ENCODE measurements at regions of chr4 and their contacts with region 1.

Region 1: DNA sequence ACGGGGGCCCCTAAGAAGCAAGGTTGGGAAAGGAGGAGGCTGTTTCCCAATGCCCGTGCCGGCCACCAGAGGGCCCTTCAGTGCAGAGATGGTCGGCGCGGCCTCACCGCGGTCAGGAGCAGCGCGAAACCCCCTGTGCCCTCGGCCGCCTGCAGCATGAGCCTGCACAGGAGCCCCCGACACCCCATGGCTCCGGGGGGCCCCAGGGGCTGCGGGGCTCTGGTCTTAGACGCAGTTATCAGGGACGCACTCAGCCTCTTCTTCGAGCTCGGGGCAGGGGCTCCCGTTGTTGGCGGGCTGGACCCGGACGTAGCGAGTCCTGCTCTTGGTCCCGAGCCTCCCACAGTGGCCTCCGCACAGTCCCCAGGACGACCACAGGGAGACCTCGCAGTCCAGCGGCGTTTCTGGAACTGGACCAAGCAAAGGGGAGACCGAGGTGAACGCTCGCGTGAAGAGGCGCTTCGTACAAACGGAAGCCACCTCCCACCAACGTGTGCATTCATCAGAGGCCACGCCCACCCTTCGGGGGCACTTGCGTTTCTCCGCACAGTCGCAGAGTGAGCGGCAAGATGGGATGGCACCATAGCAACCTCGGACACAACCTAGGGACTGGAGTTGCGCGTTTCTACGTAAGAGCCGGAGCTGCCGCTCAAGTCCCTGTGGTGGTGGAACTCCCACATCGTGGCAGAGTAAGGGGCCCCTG is 5.0 kb downstream of the SPON2 start:
- DNase-seq: peak; percentile 79 to 98 (median 91)
- ATAC-seq: peak; percentile 84
- H3K4me3 ChIP-seq: peak overlapping the region; percentile 92 to 97
- H3K4me3 Mint-ChIP-seq: peak overlapping the region; percentile 88
- H3K27ac ChIP-seq: peak overlapping the region; percentile 70 to 85
- H3K27ac Mint-ChIP-seq: peak overlapping the region; percentile 83
- H3K4me1 ChIP-seq: peaks cover 28% of the 10 kb centered on the region
- H3K4me1 Mint-ChIP-seq: peaks cover 26% of the 10 kb centered on the region
- H3K27me3 ChIP-seq: peaks cover 11 to 13% of the 10 kb centered on the region in 2 experiments
- H3K27me3 Mint-ChIP-seq: peaks cover 7% of the 10 kb centered on the region
- CTCF ChIP-seq: peak; percentile 97

Region 2: DNA sequence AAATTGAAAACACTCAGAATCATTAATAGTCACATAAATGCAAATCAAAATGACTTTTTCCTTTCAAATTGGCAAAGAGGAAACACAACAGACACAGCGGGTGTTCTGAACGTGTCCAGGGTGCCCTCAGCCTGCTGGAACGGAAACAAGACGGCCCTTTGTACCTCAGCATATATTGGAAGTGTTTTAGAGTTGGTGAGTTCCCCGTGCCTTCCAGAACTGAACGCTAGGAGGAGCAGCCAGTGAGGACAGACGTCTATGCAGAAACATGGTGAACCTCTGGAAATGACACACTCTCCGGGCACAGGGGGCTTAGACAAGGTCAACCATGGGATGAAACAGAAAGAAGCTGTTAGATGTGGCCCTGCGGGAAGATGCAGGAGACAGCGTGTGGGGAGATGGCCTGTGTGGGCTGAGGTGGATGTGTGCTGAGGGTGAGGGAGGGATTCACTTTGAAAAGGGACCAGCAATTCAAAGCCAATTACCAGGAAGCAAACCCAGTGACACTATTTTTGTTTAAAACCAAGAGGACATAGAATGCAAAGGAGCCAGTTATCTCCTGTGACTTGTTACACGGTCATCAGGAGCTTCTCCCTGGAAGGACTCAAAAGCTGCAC is 94.5 kb before region 1 on chr4:
- CTCF ChIA-PET with region 1: no interaction called
- POLR2A ChIA-PET with region 1: no interaction called
- intact Hi-C with region 1: no loop called
- DNase-seq: peak; percentile 21 to 75 (median 56)
- ATAC-seq: peak; percentile 97
- H3K4me3 ChIP-seq: no peak overlapping the region
- H3K4me3 Mint-ChIP-seq: no peak overlapping the region
- H3K27ac ChIP-seq: no peak overlapping the region
- H3K27ac Mint-ChIP-seq: peak overlapping the region; percentile 37
- H3K4me1 ChIP-seq: peaks cover 11% of the 10 kb centered on the region
- H3K4me1 Mint-ChIP-seq: peaks cover 12% of the 10 kb centered on the region
- H3K27me3 ChIP-seq: no peaks in the 10 kb centered on the region
- H3K27me3 Mint-ChIP-seq: peaks cover 15% of the 10 kb centered on the region
- CTCF ChIP-seq: peak; percentile 62

Region 3: GRCh38 chr4:1130316-1131186 is 36.8 kb before region 1 on chr4:
- CTCF ChIA-PET with region 1: interaction called, 13 read pairs
- POLR2A ChIA-PET with region 1: no interaction called
- intact Hi-C with region 1: loop called in 1 of 2 experiments (anchors 1 kb)
- DNase-seq: peak; percentile 60 to 88 (median 74)
- ATAC-seq: peak; percentile 100
- H3K4me3 ChIP-seq: no peak overlapping the region
- H3K4me3 Mint-ChIP-seq: no peak overlapping the region
- H3K27ac ChIP-seq: no peak overlapping the region
- H3K27ac Mint-ChIP-seq: no peak overlapping the region
- H3K4me1 ChIP-seq: no peaks in the 10 kb centered on the region
- H3K4me1 Mint-ChIP-seq: peaks cover 4% of the 10 kb centered on the region
- H3K27me3 ChIP-seq: no peaks in the 10 kb centered on the region
- H3K27me3 Mint-ChIP-seq: peaks cover 2% of the 10 kb centered on the region
- CTCF ChIP-seq: peak; percentile 99

Region 4: DNA sequence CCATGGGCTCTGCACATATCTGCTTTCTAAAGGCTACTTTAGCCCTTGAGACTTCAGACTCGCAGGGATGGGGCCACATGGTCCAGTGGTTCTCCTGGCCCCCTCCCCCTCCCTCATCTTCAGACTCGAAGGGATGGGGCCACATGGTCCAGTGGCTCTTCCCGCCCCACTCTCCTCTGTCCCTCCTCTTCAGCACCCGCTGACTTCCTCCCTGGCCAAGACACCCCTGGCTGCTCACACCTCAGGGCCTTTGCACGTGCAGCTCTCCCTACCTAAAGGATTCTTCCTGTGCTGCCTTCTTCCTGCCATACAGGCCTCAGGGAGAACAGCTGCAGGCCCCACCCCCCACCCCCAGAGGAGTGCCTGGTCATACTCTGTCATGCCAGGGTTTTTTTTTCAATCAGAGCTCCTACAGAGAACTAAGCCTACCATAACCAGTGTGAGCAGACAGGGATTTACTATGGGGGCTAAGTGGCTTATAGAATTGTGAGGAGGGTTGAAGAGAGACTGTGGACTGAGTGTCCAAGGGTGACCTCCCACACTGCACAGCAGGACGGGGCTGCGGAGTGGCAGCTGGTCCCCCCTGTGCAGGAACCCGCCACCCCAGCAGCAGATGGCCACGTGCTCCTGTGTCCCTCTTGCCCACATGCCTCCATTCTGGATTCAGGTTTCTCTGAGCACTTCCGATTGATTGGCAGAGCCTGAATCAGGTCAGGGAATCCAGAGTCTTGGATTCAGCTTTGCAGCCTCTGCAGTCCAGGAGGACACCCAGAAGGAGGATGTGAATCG is 11.1 kb after region 1 on chr4:
- CTCF ChIA-PET with region 1: interaction called, 16 read pairs
- POLR2A ChIA-PET with region 1: interaction called, 3 read pairs
- intact Hi-C with region 1: no loop called
- DNase-seq: no peak
- ATAC-seq: no peak
- H3K4me3 ChIP-seq: no peak overlapping the region
- H3K4me3 Mint-ChIP-seq: no peak overlapping the region
- H3K27ac ChIP-seq: no peak overlapping the region
- H3K27ac Mint-ChIP-seq: no peak overlapping the region
- H3K4me1 ChIP-seq: peaks cover 12% of the 10 kb centered on the region
- H3K4me1 Mint-ChIP-seq: peaks cover 21% of the 10 kb centered on the region
- H3K27me3 ChIP-seq: no peaks in the 10 kb centered on the region
- H3K27me3 Mint-ChIP-seq: peaks cover 3% of the 10 kb centered on the region
- CTCF ChIP-seq: no peak

Region 5: GRCh38 chr4:1218634-1219565 is 51.5 kb after region 1 on chr4:
- CTCF ChIA-PET with region 1: interaction called, 18 read pairs
- POLR2A ChIA-PET with region 1: interaction called, 3 read pairs
- intact Hi-C with region 1: loop called (anchors 1 kb)
- DNase-seq: no peak
- ATAC-seq: no peak
- H3K4me3 ChIP-seq: no peak overlapping the region
- H3K4me3 Mint-ChIP-seq: peak overlapping the region; percentile 18
- H3K27ac ChIP-seq: no peak overlapping the region
- H3K27ac Mint-ChIP-seq: peak overlapping the region; percentile 69
- H3K4me1 ChIP-seq: peaks cover 25% of the 10 kb centered on the region
- H3K4me1 Mint-ChIP-seq: peaks cover 43% of the 10 kb centered on the region
- H3K27me3 ChIP-seq: no peaks in the 10 kb centered on the region
- H3K27me3 Mint-ChIP-seq: no peaks in the 10 kb centered on the region
- CTCF ChIP-seq: no peak

Region 6: DNA sequence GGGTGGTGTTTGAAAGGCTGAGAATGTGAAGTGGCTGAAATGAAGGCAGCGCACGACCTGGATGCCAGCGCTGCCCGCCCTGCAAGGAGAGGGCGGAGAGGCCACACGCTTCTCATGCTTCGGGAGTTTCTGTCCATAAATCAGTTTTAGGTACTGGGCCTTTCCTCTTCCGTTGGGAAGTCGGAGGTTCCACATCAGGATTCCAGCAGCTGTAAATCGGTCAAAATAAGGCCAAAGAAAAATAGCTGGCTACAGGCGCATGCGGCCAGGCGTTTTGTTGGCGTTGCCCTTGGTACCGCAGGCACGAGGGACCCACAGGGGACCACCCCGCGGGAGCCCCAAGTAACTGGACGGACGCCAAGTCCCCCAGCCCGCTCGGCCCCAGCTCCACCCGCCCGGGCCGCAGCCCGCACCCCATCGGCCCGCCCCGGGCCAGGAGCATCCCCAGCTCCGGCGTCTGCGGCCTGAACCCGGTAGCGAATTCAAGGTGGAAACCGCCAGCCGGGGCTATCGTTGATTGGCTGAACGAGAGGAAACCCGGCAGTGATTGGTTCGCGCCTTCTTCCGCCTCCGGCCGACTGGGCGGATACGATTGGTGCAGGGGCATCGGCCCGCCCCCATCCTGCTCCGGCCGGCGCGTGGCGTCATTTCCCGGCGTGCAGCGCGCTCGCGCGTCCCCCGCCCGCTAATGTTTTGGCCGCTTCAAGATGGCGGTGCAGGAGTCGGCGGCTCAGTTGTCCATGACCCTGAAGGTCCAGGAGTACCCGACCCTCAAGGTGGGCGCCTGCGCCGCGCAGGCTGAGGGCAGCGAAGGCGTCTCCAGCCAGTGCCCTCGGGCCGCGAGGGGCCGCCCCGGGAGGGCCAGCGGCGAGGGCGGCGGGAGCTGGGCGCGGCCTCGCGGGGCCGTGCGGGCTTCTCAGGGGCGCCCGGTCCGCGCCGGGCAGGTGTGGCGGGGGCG is 122.1 kb after region 1 on chr4 and contains the start of gene MAEA:
- CTCF ChIA-PET with region 1: no interaction called
- POLR2A ChIA-PET with region 1: no interaction called
- intact Hi-C with region 1: loop called (anchors 1 to 5 kb)
- DNase-seq: peak; percentile 94 to 98 (median 96)
- ATAC-seq: peak; percentile 97
- H3K4me3 ChIP-seq: peak within 1 kb of the TSS; percentile 57 to 92
- H3K4me3 Mint-ChIP-seq: peak within 1 kb of the TSS; percentile 92
- H3K27ac ChIP-seq: peak within 1 kb of the TSS; percentile 74 to 80
- H3K27ac Mint-ChIP-seq: peak within 1 kb of the TSS; percentile 91
- H3K4me1 ChIP-seq: peaks cover 38% of the 10 kb centered on the region
- H3K4me1 Mint-ChIP-seq: peaks cover 42% of the 10 kb centered on the region
- H3K27me3 ChIP-seq: no peaks in the 10 kb centered on the region
- H3K27me3 Mint-ChIP-seq: no peaks in the 10 kb centered on the region
- CTCF ChIP-seq: no peak
- total RNA-seq, gene MAEA: 74.6 to 77.6 TPM

Region 7: DNA sequence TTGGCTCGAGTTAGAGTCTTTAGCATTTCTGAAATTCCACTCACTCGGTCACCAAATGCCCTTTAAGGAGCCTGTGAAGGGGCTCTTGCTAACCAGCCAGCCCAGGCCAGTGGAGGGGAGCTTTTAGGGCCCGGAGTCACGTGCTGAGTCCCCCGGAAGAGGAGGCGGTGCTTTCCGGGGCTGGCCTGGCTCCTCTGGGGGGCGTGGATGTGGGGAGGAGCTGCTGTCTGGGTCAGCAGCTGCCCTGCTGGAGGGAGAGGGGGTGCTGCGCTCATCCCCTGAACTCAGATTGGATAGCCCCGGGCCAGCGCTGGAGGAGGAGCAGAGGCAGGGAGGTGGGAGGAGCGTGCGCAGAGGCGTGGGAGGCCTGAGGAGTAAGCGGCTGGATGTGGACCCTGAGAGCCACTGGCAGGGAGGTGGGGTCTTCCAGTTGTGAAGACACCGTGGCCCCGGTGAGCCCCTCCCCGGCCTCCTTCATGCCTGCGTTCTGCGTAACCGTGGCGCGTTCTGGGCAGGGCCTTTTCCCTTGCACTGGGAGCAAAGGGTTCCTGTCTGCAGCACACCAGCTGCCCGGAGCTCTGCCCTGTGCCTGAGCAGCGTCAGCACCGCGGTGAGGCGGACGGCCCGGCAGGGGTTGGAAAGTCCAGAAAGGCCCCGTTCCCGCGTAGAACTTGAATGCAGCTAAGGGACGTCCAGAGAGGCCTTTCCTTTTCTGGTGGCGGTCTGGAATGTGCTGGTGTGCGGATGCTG is 142.0 kb after region 1 on chr4:
- CTCF ChIA-PET with region 1: no interaction called
- POLR2A ChIA-PET with region 1: no interaction called
- intact Hi-C with region 1: no loop called
- DNase-seq: peak in 8 of 9 experiments; percentile 39 to 80 (median 66)
- ATAC-seq: peak; percentile 74
- H3K4me3 ChIP-seq: peak overlapping the region; percentile 33 to 49
- H3K4me3 Mint-ChIP-seq: peak overlapping the region; percentile 79
- H3K27ac ChIP-seq: peak overlapping the region in 1 of 2 experiments; percentile 37
- H3K27ac Mint-ChIP-seq: peak overlapping the region; percentile 85
- H3K4me1 ChIP-seq: peaks cover 43% of the 10 kb centered on the region
- H3K4me1 Mint-ChIP-seq: peaks cover 59% of the 10 kb centered on the region
- H3K27me3 ChIP-seq: no peaks in the 10 kb centered on the region
- H3K27me3 Mint-ChIP-seq: no peaks in the 10 kb centered on the region
- CTCF ChIP-seq: no peak

Measured in CD8-positive, alpha-beta T cell (primary cell).